ENCODE measurements at regions of chr17 and their contacts with region 1.

Region 1: DNA sequence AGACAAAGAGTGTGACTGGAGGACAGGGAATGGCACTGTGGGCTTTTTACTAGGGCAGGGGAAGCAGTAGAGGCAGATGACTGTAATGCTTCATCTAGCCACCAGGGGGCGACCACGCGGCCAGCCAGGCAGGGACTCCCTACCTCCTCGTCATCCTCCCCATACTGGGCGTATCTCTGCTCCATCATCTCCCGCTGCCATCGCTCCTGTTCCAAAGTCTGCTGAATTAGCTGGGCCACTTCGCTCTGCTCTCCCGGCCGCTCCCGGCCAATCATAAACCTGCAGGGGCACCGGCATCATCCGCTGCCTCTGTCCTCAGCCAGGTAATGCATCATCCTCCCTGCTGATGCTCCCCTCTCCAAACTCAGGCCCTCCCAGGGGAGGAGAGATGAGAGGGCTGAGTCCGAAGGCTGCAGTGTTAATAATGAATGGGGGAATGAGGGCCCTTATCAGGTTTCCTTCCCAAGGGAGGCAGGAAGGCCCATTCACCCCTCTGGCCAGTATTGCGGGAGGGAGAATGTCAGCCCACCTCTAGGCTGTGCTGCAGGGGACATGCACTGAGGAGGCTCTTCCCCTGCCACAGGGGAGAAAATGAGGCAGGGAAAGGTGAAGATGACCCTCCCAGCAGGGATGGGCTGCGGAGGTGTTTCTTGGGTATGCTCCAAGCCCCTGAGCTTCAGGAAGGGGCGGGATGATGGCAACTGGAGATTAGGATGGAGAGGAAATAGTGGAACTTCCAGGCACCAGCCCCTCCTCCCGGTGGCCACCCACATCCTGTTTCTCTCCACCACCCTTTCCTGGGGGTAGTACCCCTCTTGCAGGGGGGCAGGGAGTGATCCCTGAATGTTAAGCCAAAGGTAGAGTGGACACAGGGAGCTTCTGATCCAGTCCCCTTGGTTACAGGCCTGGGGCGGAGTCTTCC is 10.3 kb upstream of the SAMD14 start:
- DNase-seq: peak; percentile 91
- H3K4me3 Mint-ChIP-seq: peak overlapping the region; percentile 44
- H3K27ac Mint-ChIP-seq: peak overlapping the region; percentile 78
- H3K4me1 Mint-ChIP-seq: peaks cover 49% of the 10 kb centered on the region
- H3K27me3 Mint-ChIP-seq: no peaks in the 10 kb centered on the region

Region 2: GRCh38 chr17:50151041-50151936 is 11.1 kb after region 1 on chr17:
- CTCF ChIA-PET with region 1: interaction called, 21 read pairs
- intact Hi-C with region 1: loop called (anchors 1 kb)
- DNase-seq: peak; percentile 94
- H3K4me3 Mint-ChIP-seq: peak overlapping the region; percentile 88
- H3K27ac Mint-ChIP-seq: peak overlapping the region; percentile 96
- H3K4me1 Mint-ChIP-seq: peaks cover 44% of the 10 kb centered on the region
- H3K27me3 Mint-ChIP-seq: no peaks in the 10 kb centered on the region

Region 3: GRCh38 chr17:50161023-50161910 is 21.1 kb after region 1 on chr17:
- CTCF ChIA-PET with region 1: interaction called, 44 read pairs
- intact Hi-C with region 1: loop called (anchors 1 kb)
- DNase-seq: peak; percentile 97
- H3K4me3 Mint-ChIP-seq: peak overlapping the region; percentile 64
- H3K27ac Mint-ChIP-seq: peak overlapping the region; percentile 96
- H3K4me1 Mint-ChIP-seq: peaks cover 35% of the 10 kb centered on the region
- H3K27me3 Mint-ChIP-seq: no peaks in the 10 kb centered on the region

Region 4: DNA sequence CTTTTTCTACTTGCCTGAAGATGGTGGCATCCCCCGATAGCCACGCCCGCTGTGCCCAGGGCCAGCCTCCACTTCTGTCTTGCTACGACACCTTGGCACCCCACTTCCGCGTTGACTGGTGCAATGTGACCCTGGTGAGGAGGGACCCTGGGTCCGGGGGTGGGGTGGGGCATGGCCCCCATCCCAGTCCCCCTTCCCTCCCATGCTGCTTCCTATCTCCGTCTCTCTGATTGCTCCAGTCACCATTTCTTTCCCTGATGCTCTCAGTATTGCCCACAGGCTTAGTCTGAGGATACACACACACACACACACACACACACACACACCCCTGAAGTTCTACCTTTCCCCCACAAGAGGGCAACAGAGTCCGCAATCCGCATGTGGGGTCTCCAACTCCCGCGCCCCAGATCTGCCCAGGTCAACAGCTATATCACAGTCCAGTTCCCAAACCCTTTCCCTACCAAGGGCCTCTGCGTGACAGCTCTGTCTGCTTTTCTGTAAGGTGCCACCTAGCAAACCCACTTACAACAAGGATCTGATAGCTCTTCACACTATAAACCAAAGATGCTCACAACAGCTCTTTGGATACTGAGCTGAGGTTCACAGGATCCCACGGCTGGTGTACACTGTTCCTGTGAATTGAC is 29.0 kb after region 1 on chr17:
- CTCF ChIA-PET with region 1: interaction called, 29 read pairs
- intact Hi-C with region 1: no loop called
- DNase-seq: peak; percentile 57
- H3K4me3 Mint-ChIP-seq: peak overlapping the region; percentile 46
- H3K27ac Mint-ChIP-seq: no peak overlapping the region
- H3K4me1 Mint-ChIP-seq: peaks cover 10% of the 10 kb centered on the region
- H3K27me3 Mint-ChIP-seq: no peaks in the 10 kb centered on the region

Region 5: DNA sequence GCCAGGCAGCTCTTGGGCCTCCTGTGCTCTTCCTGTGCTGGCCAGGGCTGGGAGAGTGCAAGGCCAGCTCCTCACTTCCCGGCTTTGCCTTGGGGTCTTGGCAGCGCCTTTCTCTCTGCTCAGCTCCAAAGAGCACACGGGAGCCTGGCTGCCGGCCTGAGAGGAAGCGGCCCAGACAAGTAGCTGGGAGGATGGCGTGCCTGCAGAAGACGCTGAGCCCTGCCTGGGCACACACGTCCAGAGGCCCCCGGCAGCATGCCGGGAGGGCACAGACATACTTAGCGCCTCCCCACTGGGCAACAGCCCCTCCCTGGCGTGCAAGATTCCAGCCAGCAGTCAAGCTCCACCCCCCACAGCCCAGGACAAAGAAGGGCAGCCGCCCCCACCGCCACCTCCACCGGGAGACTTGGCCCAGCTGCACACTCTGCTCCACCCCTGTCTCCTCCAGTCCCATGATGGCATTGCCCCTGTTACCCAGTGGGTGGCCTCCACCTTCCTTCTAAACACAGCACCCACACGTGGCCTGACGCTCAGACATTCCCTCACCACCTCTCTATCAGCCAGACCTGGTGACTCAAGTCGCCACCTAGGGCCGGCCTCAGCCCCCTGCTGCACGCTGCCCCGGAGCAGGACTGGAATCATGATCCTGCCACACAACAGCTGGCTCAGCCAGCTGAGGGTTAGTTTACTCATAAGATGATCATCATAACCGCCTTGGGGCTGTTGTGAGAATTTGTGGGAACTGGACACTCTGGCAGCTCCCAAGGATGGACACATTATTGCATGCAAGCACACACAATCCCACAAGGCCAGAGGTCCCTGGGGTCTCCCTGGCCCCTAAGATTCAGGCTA is 38.0 kb after region 1 on chr17:
- CTCF ChIA-PET with region 1: no interaction called
- intact Hi-C with region 1: loop called (anchors 1 kb)
- DNase-seq: peak; percentile 73
- H3K4me3 Mint-ChIP-seq: peak overlapping the region; percentile 22
- H3K27ac Mint-ChIP-seq: no peak overlapping the region
- H3K4me1 Mint-ChIP-seq: peaks cover 15% of the 10 kb centered on the region
- H3K27me3 Mint-ChIP-seq: no peaks in the 10 kb centered on the region